Endothelial cell of umbilical vein (primary cell): ENCODE measurements at regions of chr12 and their contacts with region 1.

Region 1: GRCh38 chr12:80412369-80412953 is 31.6 kb upstream of the PTPRQ start:
- DNase-seq: peak; percentile 56
- H3K4me3 ChIP-seq: no peak overlapping the region
- H3K27ac ChIP-seq: no peak overlapping the region
- H3K4me1 ChIP-seq: no peaks in the 10 kb centered on the region
- H3K27me3 ChIP-seq: no peaks in the 10 kb centered on the region
- CTCF ChIP-seq: peak; percentile 33 to 48
- POLR2A ChIP-seq: no peak

Region 2: DNA sequence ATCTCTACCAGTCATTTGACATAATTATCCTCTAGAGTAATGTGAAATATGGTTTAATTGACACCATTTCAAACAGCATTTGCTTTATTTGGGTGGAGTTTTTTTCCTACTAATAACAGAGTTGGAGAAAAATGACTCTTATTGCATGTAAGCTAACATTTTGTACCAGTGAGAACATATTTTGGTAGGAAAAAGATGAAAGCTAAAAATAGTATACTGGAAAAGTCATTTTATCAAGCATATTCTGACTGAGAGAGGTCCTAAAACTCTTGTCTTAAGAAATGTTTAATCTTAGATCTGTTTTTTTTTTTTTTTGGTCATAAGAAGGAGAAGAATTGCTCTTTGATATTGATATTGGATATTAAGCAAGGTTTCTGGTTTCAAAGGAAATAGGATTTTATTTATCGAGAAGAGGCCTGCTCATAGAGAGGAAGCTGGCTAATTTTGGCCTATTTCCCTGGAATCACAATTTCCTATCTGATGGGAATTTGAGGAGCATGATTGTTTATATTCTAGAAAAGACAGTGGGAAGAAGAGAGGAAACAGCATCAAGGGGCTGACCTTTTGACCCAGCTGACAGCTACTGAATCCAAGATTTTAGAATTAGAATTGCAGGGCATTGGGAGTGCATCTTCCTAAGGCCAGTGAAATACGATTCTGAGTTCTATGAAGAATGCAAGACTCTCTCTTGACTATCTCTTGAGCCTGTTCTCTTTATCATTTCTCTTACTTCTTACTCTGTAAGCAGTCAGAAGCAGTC is 293.7 kb before region 1 on chr12:
- CTCF ChIA-PET with region 1: no interaction called
- POLR2A ChIA-PET with region 1: no interaction called
- dilution Hi-C with region 1: no loop called
- intact Hi-C with region 1: no loop called
- DNase-seq: peak; percentile 12
- H3K4me3 ChIP-seq: no peak overlapping the region
- H3K27ac ChIP-seq: no peak overlapping the region
- H3K4me1 ChIP-seq: no peaks in the 10 kb centered on the region
- H3K27me3 ChIP-seq: no peaks in the 10 kb centered on the region
- CTCF ChIP-seq: no peak
- POLR2A ChIP-seq: no peak

Region 3: GRCh38 chr12:80598004-80598606 is 185.6 kb after region 1 on chr12:
- CTCF ChIA-PET with region 1: interaction called, 5 read pairs
- POLR2A ChIA-PET with region 1: no interaction called
- dilution Hi-C with region 1: no loop called
- intact Hi-C with region 1: loop called (anchors 1 kb)
- DNase-seq: peak; percentile 55
- H3K4me3 ChIP-seq: no peak overlapping the region
- H3K27ac ChIP-seq: no peak overlapping the region
- H3K4me1 ChIP-seq: no peaks in the 10 kb centered on the region
- H3K27me3 ChIP-seq: no peaks in the 10 kb centered on the region
- CTCF ChIP-seq: peak in 1 of 2 donors; percentile 23
- POLR2A ChIP-seq: no peak

Region 4: DNA sequence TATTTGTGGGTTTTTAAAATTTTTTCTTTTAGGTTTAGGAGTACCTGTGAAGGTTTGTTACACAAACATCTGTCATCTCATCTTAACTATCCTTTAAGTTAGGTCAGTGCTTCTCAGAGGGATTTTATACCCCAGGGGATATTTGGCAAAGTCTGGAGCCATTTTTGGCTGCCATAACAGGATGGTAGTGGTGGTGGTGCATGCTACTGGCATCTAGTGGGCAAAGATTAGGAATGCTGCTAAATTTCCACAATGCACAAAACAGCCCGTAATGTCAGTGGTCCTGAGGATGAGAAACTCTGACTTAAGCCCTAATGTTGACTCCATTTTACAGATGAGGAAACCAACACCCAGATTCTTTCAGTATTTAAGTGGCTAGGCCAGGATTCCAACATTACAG is 209.8 kb after region 1 on chr12:
- CTCF ChIA-PET with region 1: interaction called, 4 read pairs
- POLR2A ChIA-PET with region 1: no interaction called
- dilution Hi-C with region 1: no loop called
- intact Hi-C with region 1: loop called (anchors 5 kb)
- DNase-seq: no peak
- H3K4me3 ChIP-seq: no peak overlapping the region
- H3K27ac ChIP-seq: no peak overlapping the region
- H3K4me1 ChIP-seq: no peaks in the 10 kb centered on the region
- H3K27me3 ChIP-seq: no peaks in the 10 kb centered on the region
- CTCF ChIP-seq: peak; percentile 17 to 18
- POLR2A ChIP-seq: no peak

Region 5: DNA sequence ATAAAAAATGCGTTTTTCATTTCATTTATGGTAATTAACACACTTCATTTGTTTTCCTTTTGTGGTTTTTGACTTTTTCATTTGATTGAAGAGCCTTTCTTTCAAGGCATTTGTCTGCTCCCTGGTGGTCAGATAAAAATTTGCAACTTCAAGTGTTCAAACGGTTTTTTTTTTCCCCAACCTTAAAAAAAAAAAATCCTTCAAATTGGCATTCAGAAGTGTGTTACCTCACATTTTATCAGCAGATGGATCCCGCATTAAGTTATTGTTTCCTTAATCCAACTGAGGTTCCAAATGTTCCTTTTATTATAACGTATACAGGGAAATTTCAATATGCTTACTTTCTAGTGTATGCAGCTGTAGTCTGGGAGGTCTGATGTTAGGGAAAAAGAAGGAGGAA is 351.4 kb after region 1 on chr12:
- CTCF ChIA-PET with region 1: interaction called, 21 read pairs
- POLR2A ChIA-PET with region 1: no interaction called
- dilution Hi-C with region 1: no loop called
- intact Hi-C with region 1: loop called (anchors 1 kb)
- DNase-seq: peak; percentile 73
- H3K4me3 ChIP-seq: no peak overlapping the region
- H3K27ac ChIP-seq: no peak overlapping the region
- H3K4me1 ChIP-seq: no peaks in the 10 kb centered on the region
- H3K27me3 ChIP-seq: no peaks in the 10 kb centered on the region
- CTCF ChIP-seq: peak; percentile 28 to 38
- POLR2A ChIP-seq: no peak

Region 6: GRCh38 chr12:81128930-81129554 is 716.6 kb after region 1 on chr12:
- CTCF ChIA-PET with region 1: interaction called, 9 read pairs
- POLR2A ChIA-PET with region 1: no interaction called
- dilution Hi-C with region 1: no loop called
- intact Hi-C with region 1: loop called (anchors 1 kb)
- DNase-seq: peak; percentile 60
- H3K4me3 ChIP-seq: no peak overlapping the region
- H3K27ac ChIP-seq: no peak overlapping the region
- H3K4me1 ChIP-seq: no peaks in the 10 kb centered on the region
- H3K27me3 ChIP-seq: no peaks in the 10 kb centered on the region
- CTCF ChIP-seq: peak; percentile 78 to 81
- POLR2A ChIP-seq: no peak